AG04449 (cell line): ENCODE measurements at regions of chr14 and their contacts with region 1.

Region 1: DNA sequence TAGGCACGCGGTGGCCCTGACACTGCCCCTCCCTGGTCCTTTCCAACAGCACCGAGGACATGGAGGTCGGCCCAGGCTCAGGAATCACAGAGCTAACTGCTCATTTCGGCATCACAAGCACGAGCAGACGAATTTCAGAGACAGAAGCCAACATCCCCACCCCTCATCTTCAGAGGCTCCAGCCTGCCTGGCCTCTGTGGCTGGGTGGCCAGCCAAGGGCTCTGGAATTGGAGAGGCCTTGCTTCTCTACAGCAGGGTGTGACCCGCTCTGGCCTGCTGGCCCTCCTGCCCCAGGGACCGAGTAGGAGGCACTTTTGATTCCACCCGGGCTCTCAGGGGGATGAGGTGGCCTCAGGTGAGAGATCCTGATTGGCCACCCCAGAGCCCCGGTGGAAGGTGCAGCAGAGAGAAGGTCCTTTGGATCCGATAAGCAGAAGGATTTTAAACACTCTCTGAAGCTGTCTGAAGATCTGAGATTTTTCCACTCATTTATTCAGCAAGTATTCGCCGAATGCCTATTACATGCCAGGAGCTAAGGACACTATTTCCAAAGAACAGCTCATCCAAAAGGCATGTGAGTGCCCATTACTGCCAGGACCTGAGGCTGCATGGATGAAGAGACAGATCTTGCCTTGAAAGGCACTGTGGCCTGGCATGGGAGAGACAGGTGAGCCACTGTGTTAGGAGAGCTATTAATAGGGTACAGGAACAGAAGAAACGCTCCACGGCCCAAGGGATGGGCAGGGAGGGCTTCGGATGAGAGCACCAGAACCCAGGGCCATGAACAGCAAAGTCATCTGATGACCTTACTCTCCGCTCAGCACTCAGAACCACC is 10.2 kb downstream of the BAG5 start:
- DNase-seq: no peak
- H3K4me3 ChIP-seq: no peak overlapping the region
- CTCF ChIP-seq: no peak

Region 2: GRCh38 chr14:103385152-103385993 is 166.9 kb before region 1 on chr14 and contains the start of gene MARK3:
- CTCF ChIA-PET with region 1: no interaction called
- POLR2A ChIA-PET with region 1: no interaction called
- DNase-seq: peak; percentile 69
- H3K4me3 ChIP-seq: peak within 1 kb of the TSS; percentile 95
- CTCF ChIP-seq: no peak

Region 3: GRCh38 chr14:103444837-103445524 is 107.2 kb before region 1 on chr14:
- CTCF ChIA-PET with region 1: no interaction called
- POLR2A ChIA-PET with region 1: no interaction called
- DNase-seq: peak; percentile 47
- H3K4me3 ChIP-seq: no peak overlapping the region
- CTCF ChIP-seq: no peak

Region 4: GRCh38 chr14:103562429-103563225 is 10.4 kb after region 1 on chr14 and contains the starts of genes BAG5 and COA8:
- CTCF ChIA-PET with region 1: interaction called, 79 read pairs
- POLR2A ChIA-PET with region 1: interaction called, 10 read pairs
- DNase-seq: no peak
- H3K4me3 ChIP-seq: peak within 1 kb of the TSS; percentile 67
- CTCF ChIP-seq: no peak

Region 5: DNA sequence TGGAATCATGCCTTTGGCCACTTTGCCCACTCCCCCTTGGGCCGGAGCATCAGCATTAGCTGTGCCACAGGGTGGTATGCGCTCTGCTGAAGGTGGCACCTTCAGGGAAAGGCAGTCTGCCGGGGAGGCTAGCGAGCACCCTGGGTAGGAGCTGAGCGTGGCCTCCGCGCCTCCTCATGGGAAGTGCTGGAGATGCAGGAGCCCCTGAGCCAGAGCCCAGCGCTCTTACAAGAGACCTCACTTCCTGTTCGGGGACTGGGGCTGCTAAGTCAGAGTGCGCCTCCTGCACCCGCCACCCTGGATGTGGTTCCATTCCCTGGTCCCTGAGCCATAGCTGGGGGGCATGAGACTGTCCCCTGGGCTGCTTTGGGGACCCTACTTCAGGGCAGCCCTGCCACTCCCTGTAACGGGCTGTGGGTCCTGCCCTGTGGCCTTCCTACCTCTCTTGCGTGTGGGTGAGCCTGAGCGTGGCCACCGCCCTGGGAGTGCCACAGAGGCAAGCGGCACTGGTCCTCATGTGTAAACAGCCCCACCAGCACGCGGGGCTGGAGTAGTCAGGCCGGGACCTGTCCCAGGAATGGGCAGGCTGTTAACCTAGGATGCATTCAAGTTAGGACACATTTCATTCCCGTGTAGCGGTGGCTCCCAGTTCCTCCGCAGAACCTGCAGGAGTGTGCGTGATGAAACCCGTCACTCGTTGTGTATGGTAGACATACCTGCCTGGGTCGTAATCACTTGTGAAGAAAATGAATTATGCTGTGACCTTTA is 29.9 kb after region 1 on chr14:
- CTCF ChIA-PET with region 1: no interaction called
- POLR2A ChIA-PET with region 1: no interaction called
- DNase-seq: no peak
- H3K4me3 ChIP-seq: no peak overlapping the region
- CTCF ChIP-seq: no peak

Region 6: GRCh38 chr14:103862393-103862782 is 310.2 kb after region 1 on chr14:
- CTCF ChIA-PET with region 1: no interaction called
- POLR2A ChIA-PET with region 1: no interaction called
- DNase-seq: no peak
- H3K4me3 ChIP-seq: no peak overlapping the region
- CTCF ChIP-seq: no peak